Activated T-helper 2 cell treated with anti-CD3 and anti-CD28 coated beads, Interferon-gamma antibody, Interleukin-2, Interleukin-4, amounts not matched to agents 10 μg/mL and 5 μg/mL and 100 μg/mL, durations not matched to agents 14 hours and 24 hours and 36 hours (primary cell): ENCODE measurements at regions of chr11 and their contacts with region 1.

Region 1: GRCh38 chr11:36289226-36289852 is at the start of gene COMMD9:
- DNase-seq: peak; percentile 92
- H3K4me3 Mint-ChIP-seq: peak within 1 kb of the TSS; percentile 88
- H3K27ac Mint-ChIP-seq: peak within 1 kb of the TSS; percentile 75
- H3K4me1 Mint-ChIP-seq: peaks cover 22% of the 10 kb centered on the region
- H3K27me3 Mint-ChIP-seq: no peaks in the 10 kb centered on the region
- total RNA-seq, gene COMMD9: 35.8 and 39.8 TPM in 2 replicates

Region 2: DNA sequence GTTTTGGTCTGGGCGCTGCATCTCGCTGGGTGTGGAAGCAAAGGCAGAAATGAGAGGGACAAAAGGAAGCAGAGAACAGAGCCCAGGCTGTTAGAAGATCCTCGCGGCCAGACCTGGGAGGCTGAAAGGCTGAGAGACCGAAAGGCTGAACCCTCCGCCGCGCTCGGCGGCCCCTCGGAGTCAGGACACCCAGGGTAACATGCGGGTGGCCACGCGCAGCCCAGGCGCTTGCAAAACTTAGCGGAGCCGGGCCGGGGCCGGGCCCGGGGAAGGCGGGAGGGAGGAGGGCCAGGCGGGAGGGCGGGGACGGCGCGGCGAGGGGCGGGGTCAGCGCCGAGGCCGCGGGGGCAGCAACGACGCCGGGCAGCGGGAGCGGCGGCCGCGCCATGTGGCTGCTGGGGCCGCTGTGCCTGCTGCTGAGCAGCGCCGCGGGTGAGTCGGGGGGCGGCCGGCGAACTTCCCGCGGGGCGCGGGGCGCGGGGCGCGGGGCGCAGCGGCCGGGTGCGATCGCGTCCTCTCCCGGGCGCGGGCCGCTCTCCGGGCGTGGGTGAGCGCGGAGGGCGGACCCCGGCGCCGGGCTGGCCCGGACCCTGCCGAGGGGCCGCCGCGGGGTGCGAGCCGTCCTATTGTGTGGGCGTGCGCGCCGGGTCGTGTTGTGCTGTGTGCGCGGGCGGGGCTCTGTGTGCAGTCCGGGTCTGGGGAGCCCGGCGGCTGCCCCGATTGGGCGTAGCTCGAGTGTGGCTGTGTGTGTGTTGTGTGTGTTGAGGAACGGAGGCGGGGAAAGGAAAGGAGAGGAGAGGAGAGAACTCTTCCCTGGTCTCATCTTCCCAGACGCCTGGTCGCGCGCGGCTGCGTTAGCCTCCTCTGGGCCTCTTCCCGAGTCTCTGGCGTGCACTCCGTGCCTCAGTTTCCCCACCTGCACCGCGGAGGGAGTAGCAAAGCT is 345.4 kb before region 1 on chr11 and contains the start of gene LDLRAD3:
- intact Hi-C with region 1: loop called (anchors 5 kb)
- DNase-seq: peak; percentile 9
- H3K4me3 Mint-ChIP-seq: peak within 1 kb of the TSS; percentile 82
- H3K27ac Mint-ChIP-seq: peak within 1 kb of the TSS; percentile 14
- H3K4me1 Mint-ChIP-seq: peaks cover 8% of the 10 kb centered on the region
- H3K27me3 Mint-ChIP-seq: peaks cover 53% of the 10 kb centered on the region
- total RNA-seq, gene LDLRAD3: 0.76 and 1.4 TPM in 2 replicates

Region 3: DNA sequence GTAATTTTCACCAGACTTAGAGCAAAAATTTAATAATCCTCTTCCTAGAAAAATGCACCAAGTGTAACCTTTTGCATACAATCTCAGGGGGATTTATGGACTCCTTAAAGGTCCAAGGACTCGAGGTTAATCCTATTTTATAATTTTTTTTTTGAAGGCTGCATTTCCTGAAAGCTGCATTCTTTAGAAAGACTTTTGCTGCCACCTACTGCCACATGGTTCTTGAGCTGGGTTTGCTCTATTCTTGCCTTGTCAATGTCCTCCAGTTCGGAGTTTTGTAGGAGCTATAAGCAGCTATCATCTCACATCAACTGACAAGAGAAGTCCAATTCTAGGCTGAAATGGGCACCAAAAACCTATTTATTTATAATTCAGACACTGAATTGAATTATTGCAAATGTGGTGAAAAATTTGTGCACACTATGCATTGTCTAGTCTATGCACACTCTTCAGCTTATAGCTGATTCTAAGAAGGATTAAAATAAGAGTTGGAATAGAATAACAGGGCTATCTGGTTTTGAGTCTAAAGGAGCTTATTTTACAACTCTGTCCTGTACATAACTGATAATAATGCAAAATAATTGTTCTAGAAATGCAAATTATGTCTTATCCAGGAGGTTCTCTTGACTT is 189.5 kb after region 1 on chr11:
- intact Hi-C with region 1: loop called (anchors 1 kb)
- DNase-seq: no peak
- H3K4me3 Mint-ChIP-seq: no peak overlapping the region
- H3K27ac Mint-ChIP-seq: no peak overlapping the region
- H3K4me1 Mint-ChIP-seq: peaks cover 9% of the 10 kb centered on the region
- H3K27me3 Mint-ChIP-seq: peaks cover 4% of the 10 kb centered on the region

Region 4: GRCh38 chr11:36492724-36493304 is 203.5 kb after region 1 on chr11:
- intact Hi-C with region 1: loop called (anchors 1 kb)
- DNase-seq: no peak
- H3K4me3 Mint-ChIP-seq: no peak overlapping the region
- H3K27ac Mint-ChIP-seq: no peak overlapping the region
- H3K4me1 Mint-ChIP-seq: peaks cover 16% of the 10 kb centered on the region
- H3K27me3 Mint-ChIP-seq: no peaks in the 10 kb centered on the region

Region 5: GRCh38 chr11:36509694-36510566 is 220.6 kb after region 1 on chr11 and contains the start of gene TRAF6:
- intact Hi-C with region 1: loop called (anchors 1 kb)
- DNase-seq: peak; percentile 84
- H3K4me3 Mint-ChIP-seq: peak within 1 kb of the TSS; percentile 97
- H3K27ac Mint-ChIP-seq: peak within 1 kb of the TSS; percentile 92
- H3K4me1 Mint-ChIP-seq: peaks cover 25% of the 10 kb centered on the region
- H3K27me3 Mint-ChIP-seq: peaks cover 6% of the 10 kb centered on the region
- total RNA-seq, gene TRAF6: 9.0 and 10.2 TPM in 2 replicates

Region 6: GRCh38 chr11:36672813-36673450 is 383.6 kb after region 1 on chr11:
- intact Hi-C with region 1: loop called (anchors 1 kb)
- DNase-seq: no peak
- H3K4me3 Mint-ChIP-seq: no peak overlapping the region
- H3K27ac Mint-ChIP-seq: no peak overlapping the region
- H3K4me1 Mint-ChIP-seq: no peaks in the 10 kb centered on the region
- H3K27me3 Mint-ChIP-seq: no peaks in the 10 kb centered on the region

Region 7: DNA sequence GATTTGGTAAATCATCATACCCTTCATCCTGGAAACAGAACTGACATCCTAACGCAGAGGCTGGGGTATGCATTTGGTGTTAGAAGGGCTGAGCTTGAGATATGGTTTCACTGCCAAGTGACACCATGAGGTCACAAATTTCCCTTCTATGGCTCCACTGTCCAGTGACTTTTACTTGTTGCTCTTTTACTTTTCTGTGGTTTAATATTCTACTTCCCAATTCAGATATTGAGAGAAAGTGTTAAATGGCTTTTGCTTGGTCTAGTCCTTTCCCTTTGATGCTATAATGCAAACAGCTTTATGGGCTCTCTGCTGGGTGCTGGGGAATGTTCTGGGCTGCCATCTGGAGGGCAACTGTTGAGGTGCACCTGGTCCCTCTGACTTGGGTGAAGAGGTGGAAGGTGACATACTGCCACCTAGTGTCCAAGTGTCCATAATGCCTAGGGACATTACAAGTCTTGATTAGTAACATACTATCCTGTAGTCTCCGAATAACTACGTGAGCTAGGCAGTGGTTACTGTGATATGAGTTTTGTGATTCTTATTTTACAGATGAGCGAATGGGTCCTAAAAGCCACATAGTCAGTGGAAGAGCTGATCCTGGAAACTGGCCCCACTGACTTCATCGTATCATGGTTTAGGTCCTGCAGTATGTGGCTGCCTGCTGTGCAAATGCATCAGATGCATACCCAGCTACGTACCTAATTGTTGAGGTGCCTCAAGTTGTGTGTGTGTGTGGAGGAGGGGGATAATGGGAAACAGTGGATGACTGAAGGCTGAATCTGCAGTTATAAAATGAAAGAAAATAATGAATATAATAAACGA is 457.8 kb after region 1 on chr11:
- intact Hi-C with region 1: loop called (anchors 2 kb)
- DNase-seq: peak; percentile 80
- H3K4me3 Mint-ChIP-seq: no peak overlapping the region
- H3K27ac Mint-ChIP-seq: no peak overlapping the region
- H3K4me1 Mint-ChIP-seq: peaks cover 6% of the 10 kb centered on the region
- H3K27me3 Mint-ChIP-seq: peaks cover 12% of the 10 kb centered on the region